ENCODE measurements at regions of chr2 and their contacts with region 1.

Region 1: DNA sequence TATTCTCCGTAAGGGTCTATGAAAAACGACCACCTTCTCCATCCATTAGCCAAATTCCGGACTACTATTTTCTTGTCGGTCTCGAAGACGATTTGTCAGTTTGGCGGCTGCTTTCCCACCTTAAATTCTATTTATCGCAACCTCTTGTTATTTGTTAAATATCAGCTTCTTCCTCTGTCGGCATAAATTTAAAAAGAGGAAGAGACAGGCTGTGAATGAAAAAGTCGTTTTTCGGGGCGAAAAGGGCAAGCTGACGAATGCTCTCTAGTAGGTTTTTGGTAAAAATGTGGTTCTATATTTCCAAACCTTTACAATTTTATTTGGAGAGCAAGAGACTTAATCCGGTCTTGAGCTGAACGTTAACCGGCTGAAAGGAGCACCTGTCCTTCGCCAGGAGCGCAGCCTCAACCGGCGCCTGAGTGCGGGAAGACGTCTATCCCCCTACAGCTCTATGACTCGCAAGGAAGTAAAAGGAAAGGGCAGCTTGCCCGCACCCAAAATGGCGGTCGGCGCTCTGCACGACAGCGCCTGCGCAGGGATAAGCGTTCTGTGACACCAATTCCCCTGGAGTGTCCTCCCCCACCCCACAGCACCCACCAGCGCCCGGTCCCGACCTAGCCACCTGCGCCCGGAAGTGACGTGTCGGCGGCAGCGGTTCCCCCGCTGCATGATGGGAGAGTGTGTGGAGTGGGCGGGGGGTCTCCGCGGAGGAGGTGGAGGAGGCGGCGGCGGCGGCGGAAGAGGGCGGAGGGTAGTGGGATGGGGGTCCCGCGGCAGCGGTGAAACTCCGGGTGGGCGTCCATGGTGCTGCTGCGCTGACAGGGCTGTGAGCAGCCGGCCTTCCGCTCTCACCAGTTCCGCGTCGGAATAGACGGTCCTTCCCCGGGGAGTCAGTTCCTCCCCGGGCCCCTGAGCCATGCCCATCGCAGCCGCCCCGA is at the start of gene AFTPH:
- DNase-seq: peak; percentile 100
- H3K4me3 Mint-ChIP-seq: peak within 1 kb of the TSS; percentile 99
- H3K27ac Mint-ChIP-seq: peak within 1 kb of the TSS; percentile 98
- H3K4me1 Mint-ChIP-seq: peaks cover 31% of the 10 kb centered on the region
- H3K27me3 Mint-ChIP-seq: peaks cover 2% of the 10 kb centered on the region
- total RNA-seq, gene AFTPH: 34.8 to 36.4 TPM

Region 2: DNA sequence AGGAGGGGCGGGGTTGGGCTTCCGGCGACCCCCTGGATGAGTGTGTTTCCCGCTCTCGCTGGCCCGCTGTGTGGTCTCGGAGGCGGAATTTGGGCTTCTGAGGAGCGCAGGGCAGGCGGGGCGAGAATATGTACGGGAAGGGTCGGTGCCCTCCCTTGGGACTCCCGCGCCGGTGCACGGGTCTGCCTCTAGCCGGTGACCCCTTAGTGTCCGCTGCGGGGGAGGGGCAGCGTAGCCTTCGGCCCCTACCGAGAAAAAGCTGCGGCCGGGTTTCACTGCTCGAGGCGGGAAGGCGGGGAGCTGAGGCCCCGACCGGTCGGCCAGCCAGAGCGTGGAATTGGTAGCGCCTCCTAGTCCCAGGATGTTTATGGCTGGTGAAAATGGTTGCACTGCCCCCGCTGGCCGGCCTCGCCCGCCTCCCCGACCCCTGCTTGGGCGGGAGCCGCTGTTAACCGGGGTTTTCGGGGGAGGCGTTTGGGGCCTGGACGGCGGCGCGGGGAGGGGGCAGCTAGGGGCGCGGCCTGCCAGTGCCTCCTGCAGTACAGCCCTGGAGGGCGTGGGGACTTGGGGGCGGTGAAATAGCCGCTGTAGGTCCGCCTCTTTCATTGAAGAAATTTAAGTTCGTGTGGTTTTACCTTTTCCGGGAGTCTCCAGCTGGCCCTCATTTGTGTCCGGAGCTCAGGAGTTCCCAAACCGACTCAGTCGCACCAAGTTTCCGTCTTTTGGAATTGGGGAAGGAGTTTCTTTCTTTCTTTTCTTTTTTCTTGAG is 682.5 kb before region 1 on chr2 and contains the start of gene UGP2:
- CTCF ChIA-PET with region 1: no interaction called
- POLR2A ChIA-PET with region 1: no interaction called
- intact Hi-C with region 1: loop called (anchors 5 kb)
- DNase-seq: peak; percentile 91
- H3K4me3 Mint-ChIP-seq: peak within 1 kb of the TSS; percentile 99
- H3K27ac Mint-ChIP-seq: peak within 1 kb of the TSS; percentile 100
- H3K4me1 Mint-ChIP-seq: peaks cover 44% of the 10 kb centered on the region
- H3K27me3 Mint-ChIP-seq: no peaks in the 10 kb centered on the region
- total RNA-seq, gene UGP2: 113 to 119 TPM

Region 3: GRCh38 chr2:64488050-64488974 is 35.6 kb before region 1 on chr2:
- CTCF ChIA-PET with region 1: interaction called, 16 read pairs
- POLR2A ChIA-PET with region 1: no interaction called
- intact Hi-C with region 1: no loop called
- DNase-seq: peak; percentile 85
- H3K4me3 Mint-ChIP-seq: no peak overlapping the region
- H3K27ac Mint-ChIP-seq: no peak overlapping the region
- H3K4me1 Mint-ChIP-seq: peaks cover 10% of the 10 kb centered on the region
- H3K27me3 Mint-ChIP-seq: peaks cover under 1% of the 10 kb centered on the region

Region 4: DNA sequence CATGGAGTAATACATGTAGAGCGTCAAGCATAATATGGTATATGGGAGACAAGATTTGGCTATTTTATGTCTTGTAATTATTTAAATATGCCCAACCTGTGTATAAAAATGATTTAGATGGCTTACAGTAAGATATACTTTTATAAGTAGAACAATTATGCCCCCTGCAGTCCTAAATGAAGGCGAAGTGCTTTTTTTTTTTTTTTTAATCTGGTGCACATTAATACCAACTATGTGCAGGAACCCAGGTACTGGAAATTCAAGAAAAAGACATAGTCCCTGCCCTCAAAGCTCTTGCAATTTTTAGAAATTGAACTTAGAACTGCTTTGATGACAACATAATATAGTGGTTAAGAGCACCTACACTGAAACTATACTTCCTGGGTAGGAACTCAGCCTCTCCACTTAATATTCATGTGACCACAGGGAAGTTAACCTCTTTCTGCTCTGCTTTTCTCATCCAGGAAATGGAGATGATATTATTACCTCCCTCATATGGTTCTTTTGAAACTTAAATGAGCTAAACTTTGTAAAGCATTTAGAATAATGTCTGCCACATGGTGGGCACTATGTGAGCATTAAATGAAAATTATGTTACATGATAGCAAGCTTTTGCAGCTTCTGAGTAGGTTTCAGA is 38.3 kb after region 1 on chr2:
- CTCF ChIA-PET with region 1: interaction called, 161 read pairs
- POLR2A ChIA-PET with region 1: interaction called, 11 read pairs
- intact Hi-C with region 1: loop called (anchors 1 kb)
- DNase-seq: no peak
- H3K4me3 Mint-ChIP-seq: no peak overlapping the region
- H3K27ac Mint-ChIP-seq: no peak overlapping the region
- H3K4me1 Mint-ChIP-seq: peaks cover 48% of the 10 kb centered on the region
- H3K27me3 Mint-ChIP-seq: no peaks in the 10 kb centered on the region

Region 5: GRCh38 chr2:64644177-64645004 is 120.5 kb after region 1 on chr2:
- CTCF ChIA-PET with region 1: interaction called, 13 read pairs
- POLR2A ChIA-PET with region 1: no interaction called
- intact Hi-C with region 1: no loop called
- DNase-seq: peak; percentile 63
- H3K4me3 Mint-ChIP-seq: peak overlapping the region; percentile 82
- H3K27ac Mint-ChIP-seq: peak overlapping the region; percentile 78
- H3K4me1 Mint-ChIP-seq: peaks cover 53% of the 10 kb centered on the region
- H3K27me3 Mint-ChIP-seq: no peaks in the 10 kb centered on the region

Region 6: DNA sequence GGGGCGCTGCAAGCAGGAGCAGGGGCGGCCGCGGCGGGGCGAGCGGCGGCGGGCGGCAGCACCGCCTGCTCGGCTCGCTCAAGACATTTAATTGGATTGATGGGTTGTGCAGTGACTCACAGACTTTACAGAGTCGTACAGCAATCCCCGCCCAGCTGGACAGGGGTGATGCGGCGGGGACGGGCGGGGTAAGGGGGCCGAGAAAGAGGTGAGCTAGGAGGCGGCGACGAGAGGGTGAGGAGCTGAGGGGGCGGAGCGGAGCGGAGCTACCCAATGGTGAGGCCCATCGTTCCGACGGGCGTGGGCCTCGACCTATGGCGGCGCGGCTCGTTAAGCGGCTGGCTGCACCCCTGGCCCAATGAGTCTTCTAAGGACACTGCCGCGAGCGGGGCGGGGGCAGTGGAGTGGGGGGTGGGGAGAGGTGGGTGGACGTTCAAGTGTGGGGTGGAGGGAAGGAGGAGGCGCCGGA is 226.9 kb after region 1 on chr2:
- CTCF ChIA-PET with region 1: no interaction called
- POLR2A ChIA-PET with region 1: interaction called, 7 read pairs
- intact Hi-C with region 1: loop called (anchors 1 kb)
- DNase-seq: peak; percentile 99
- H3K4me3 Mint-ChIP-seq: peak overlapping the region; percentile 95
- H3K27ac Mint-ChIP-seq: peak overlapping the region; percentile 89
- H3K4me1 Mint-ChIP-seq: peaks cover 22% of the 10 kb centered on the region
- H3K27me3 Mint-ChIP-seq: no peaks in the 10 kb centered on the region

Region 7: GRCh38 chr2:64873472-64873924 is 349.6 kb after region 1 on chr2:
- CTCF ChIA-PET with region 1: interaction called, 19 read pairs
- POLR2A ChIA-PET with region 1: no interaction called
- intact Hi-C with region 1: loop called (anchors 1 kb)
- DNase-seq: peak; percentile 89
- H3K4me3 Mint-ChIP-seq: peak overlapping the region; percentile 23
- H3K27ac Mint-ChIP-seq: no peak overlapping the region
- H3K4me1 Mint-ChIP-seq: peaks cover 7% of the 10 kb centered on the region
- H3K27me3 Mint-ChIP-seq: peaks cover 2% of the 10 kb centered on the region

Region 8: GRCh38 chr2:64945973-64946768 is 422.2 kb after region 1 on chr2:
- CTCF ChIA-PET with region 1: no interaction called
- POLR2A ChIA-PET with region 1: no interaction called
- intact Hi-C with region 1: no loop called
- DNase-seq: peak; percentile 83
- H3K4me3 Mint-ChIP-seq: peak overlapping the region; percentile 61
- H3K27ac Mint-ChIP-seq: peak overlapping the region; percentile 47
- H3K4me1 Mint-ChIP-seq: peaks cover 27% of the 10 kb centered on the region
- H3K27me3 Mint-ChIP-seq: no peaks in the 10 kb centered on the region

Measured in activated CD4-positive, alpha-beta memory T cell treated with anti-CD3 and anti-CD28 coated beads for 36 hours (primary cell).